AG04449 (cell line): ENCODE measurements at regions of chr16 and their contacts with region 1.

Region 1: GRCh38 chr16:48623304-48624016 is 13.5 kb upstream of the N4BP1 start:
- DNase-seq: peak; percentile 14
- H3K4me3 ChIP-seq: peak overlapping the region; percentile 54
- CTCF ChIP-seq: peak; percentile 99

Region 2: GRCh38 chr16:46918861-46919792 is 1704.3 kb before region 1 on chr16:
- CTCF ChIA-PET with region 1: no interaction called
- POLR2A ChIA-PET with region 1: no interaction called
- DNase-seq: no peak
- H3K4me3 ChIP-seq: no peak overlapping the region
- CTCF ChIP-seq: no peak

Region 3: GRCh38 chr16:46947900-46948547 is 1675.4 kb before region 1 on chr16:
- CTCF ChIA-PET with region 1: interaction called, 10 read pairs
- POLR2A ChIA-PET with region 1: no interaction called
- DNase-seq: no peak
- H3K4me3 ChIP-seq: no peak overlapping the region
- CTCF ChIP-seq: peak; percentile 47

Region 4: DNA sequence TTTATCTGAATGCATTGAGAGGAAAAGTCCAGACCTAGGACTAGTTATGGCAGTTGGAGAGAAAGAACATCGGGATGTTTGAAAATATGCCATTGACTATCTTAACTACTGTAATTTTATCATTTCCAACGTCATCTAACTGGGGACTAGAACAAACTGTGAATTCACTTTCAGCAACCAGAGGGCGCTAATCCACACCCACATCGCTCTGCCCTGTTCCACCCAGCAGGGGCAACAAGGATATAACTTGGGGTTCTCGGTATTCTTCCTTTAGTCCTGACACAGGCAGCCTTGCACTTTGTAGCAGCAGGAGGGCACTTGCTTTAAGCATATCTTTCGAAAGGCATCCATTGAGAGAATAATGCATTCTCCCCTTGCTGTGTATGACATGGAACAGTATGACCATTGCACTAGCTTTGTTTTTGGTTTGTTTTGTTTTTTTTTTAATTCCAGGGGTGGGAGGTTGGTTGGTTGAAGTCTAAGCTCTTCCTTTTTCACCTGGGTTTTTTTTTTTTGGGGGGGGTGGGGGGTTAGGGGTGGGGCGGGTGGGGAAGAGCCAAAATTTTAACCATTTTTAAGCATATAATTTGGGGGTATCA is 269.8 kb before region 1 on chr16:
- CTCF ChIA-PET with region 1: interaction called, 77 read pairs
- POLR2A ChIA-PET with region 1: no interaction called
- DNase-seq: no peak
- H3K4me3 ChIP-seq: no peak overlapping the region
- CTCF ChIP-seq: peak; percentile 83

Region 5: GRCh38 chr16:48373258-48374029 is 250.0 kb before region 1 on chr16:
- CTCF ChIA-PET with region 1: interaction called, 61 read pairs
- POLR2A ChIA-PET with region 1: no interaction called
- DNase-seq: no peak
- H3K4me3 ChIP-seq: no peak overlapping the region
- CTCF ChIP-seq: no peak

Region 6: DNA sequence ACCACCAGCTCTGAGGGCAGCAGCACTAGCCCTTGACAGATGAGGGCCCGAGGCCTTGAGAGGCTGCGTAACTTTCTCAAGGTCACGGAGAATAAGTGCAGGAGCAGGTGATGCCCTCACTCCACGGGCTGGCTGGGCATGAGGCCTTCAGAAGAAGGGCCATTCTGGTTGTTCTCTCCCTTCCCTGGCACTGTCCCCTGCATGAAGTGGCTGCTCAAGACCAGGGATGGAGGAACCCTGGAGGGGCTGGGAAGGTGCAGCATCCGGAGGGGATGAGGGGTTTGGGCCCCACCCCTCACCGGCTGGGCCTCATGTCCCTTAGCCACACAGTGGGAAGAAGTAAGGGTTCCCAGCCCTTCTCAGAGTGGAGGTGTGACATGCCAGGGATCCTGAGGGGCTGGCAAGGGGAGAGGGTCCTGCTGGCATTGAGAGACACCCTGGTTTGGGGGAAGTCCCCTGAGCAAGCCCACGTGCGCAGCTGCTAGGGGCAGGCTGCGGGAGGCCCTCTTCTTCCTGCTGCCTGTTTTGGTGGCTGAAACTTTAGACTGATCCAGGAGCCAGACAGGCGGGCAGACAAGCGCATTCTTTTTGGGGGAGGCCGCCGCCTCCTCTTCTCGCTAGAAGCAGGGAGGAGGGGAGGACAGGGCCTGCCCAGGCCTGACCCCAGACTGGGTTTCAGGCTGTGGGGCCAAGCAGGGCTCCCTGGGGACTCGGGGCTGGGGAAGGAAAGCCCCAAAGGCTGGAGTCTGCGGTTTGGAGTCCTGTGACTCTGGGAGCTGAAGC is 87.4 kb before region 1 on chr16:
- CTCF ChIA-PET with region 1: interaction called, 25 read pairs
- POLR2A ChIA-PET with region 1: interaction called, 3 read pairs
- DNase-seq: peak; percentile 41
- H3K4me3 ChIP-seq: no peak overlapping the region
- CTCF ChIP-seq: no peak

Region 7: GRCh38 chr16:48556913-48557351 is 66.5 kb before region 1 on chr16:
- CTCF ChIA-PET with region 1: interaction called, 23 read pairs
- POLR2A ChIA-PET with region 1: no interaction called
- DNase-seq: peak; percentile 34
- H3K4me3 ChIP-seq: no peak overlapping the region
- CTCF ChIP-seq: no peak

Region 8: DNA sequence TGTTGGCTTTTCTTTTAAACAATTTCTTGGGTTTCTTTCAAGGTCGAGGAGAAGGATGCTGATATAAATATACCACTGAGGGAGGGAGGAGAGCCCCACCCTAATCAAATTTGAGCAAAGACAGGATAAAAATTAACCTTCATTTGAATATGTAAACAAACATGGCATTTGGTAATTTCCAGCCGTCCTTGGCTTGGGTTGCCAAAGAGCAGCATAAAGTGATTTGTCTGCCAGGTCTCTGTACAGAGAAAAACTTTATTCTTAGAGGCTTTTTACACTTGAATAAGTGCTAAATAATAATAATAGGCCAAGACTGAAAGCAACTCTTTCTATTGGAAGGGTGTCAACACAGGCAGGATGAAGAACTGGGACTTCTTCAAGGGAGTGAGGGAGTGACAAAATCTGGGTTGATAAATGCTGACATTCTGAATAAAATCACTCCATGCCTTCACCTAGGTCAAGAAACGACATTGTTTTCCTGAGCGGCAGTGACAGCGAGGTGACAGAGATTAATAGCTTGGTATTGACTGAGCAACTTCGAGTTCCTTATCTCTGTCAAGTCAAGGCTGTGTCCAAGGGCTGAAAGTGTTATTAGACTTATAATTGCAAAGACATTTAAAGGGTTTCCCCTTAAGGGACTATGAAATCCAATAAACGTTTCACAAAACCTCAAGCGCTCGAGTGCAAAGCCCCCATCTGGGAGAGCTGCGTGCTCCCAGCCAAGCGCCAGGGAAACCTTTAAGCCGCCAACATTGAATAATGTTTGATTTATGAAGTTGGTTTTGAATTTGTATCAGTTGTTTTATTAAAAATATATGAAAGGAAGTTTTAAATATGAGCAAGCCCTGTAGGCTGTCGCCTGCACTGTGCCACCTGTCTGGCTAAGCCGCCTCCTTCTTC is 256.0 kb after region 1 on chr16:
- CTCF ChIA-PET with region 1: no interaction called
- POLR2A ChIA-PET with region 1: no interaction called
- DNase-seq: no peak
- H3K4me3 ChIP-seq: no peak overlapping the region
- CTCF ChIP-seq: no peak